ENCODE measurements at regions of chr9 and their contacts with region 1.

Region 1: DNA sequence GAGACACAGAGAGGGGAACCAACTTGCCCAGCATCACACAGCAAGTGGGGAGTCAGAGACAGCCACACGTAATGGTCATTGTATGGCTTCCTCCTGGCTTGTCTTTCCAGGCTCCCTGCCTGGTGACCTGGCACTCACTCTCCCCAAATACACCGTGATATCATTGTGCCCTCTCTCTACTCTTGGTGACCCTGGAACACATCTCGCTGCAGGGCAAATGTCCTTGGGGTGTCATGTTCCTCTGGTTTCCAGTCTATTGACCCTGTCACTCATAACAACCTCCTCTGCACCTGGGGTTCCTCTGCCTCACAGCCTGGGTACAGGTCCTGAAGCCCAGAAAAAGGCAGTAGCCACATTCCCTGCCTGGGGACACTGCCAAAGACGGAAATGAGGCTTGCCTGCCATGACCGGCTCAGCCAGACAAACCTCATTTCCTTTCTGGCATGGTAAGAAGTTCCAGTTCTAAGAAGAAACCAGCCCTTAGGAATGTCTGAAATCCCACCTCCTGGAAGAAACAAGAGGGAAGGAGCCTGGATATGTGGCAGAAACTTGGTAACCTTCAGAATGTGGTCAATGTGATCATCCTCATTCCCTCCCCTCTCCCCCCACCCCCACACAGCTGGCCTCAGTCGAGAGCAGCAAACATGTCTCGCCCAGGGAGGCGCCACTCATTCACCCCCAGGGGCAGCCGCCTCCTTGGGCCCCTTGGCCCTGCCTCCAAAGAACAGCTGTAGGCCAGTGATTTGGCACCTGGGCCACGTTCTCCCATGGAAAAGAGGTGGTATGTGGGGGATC is 30.6 kb upstream of the SMU1 start:
- DNase-seq: peak in 1 of 2 donors; percentile 87
- H3K4me3 ChIP-seq: no peak overlapping the region
- H3K27ac ChIP-seq: peak overlapping the region; percentile 67
- H3K4me1 ChIP-seq: peaks cover 18% of the 10 kb centered on the region
- H3K27me3 ChIP-seq: no peaks in the 10 kb centered on the region
- CTCF ChIP-seq: no peak
- POLR2A ChIP-seq: no peak

Region 2: DNA sequence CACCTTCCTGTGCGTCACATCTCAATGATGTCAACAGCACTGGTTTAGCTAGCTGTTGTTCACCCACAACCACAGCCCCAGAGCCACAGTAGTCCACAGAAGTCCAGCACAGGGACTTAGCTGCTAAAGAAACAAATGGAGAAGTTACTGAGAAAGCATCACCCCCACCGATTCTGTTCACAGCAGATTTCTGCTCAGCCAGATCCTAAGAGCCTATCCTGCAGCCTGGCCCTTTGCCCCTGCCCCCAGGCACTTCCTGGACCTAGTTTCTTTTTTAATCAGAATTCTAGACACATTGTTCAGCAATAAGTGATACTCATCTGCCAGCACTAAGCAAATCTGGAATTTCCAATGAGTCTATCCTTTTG is 52.7 kb after region 1 on chr9:
- intact Hi-C with region 1: loop called (anchors 10 kb)
- DNase-seq: peak in 1 of 2 donors; percentile 88
- H3K4me3 ChIP-seq: no peak overlapping the region
- H3K27ac ChIP-seq: peak overlapping the region; percentile 98
- H3K4me1 ChIP-seq: peaks cover 94% of the 10 kb centered on the region
- H3K27me3 ChIP-seq: no peaks in the 10 kb centered on the region
- CTCF ChIP-seq: no peak
- POLR2A ChIP-seq: no peak